ENCODE measurements at regions of chr1 and their contacts with region 1.

Region 1: DNA sequence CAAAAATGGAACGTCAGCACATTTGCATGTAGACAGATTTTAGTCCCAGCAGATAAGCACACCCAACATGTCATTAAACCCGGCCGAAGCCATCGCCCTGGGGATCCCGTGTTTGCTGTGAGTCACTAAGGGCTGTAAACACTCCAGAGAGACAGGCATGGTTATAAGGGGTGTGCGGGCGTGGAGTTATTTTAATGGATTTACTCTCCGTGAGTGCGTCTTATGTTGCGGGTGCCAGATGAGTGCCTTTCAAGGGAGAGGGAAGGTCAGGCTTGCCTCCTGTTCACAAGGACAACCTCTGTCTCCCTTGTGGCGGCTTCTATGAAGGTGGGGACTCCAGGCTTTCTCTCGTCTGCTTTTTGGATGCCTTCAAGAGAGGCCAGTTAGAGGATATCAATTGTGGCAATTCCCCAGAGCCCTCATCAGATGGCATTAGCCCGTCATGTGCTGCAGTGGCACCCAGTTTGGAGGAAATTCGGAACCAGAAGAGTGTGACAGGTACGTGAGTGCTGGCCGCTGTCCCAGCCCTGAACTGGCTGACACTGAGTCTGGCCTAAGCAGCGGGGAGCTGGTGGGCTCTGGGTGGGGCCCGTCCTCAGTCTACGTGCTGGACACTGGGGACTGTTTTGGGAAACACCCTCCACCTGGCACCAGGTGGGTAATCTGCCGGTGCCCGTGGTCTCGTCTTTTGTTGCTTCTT is 223.8 kb upstream of the TMEM51 start:
- DNase-seq: no peak
- H3K4me3 ChIP-seq: no peak overlapping the region
- H3K27ac ChIP-seq: no peak overlapping the region
- H3K4me1 ChIP-seq: peaks cover 17% of the 10 kb centered on the region
- H3K27me3 ChIP-seq: no peaks in the 10 kb centered on the region
- CTCF ChIP-seq: no peak

Region 2: DNA sequence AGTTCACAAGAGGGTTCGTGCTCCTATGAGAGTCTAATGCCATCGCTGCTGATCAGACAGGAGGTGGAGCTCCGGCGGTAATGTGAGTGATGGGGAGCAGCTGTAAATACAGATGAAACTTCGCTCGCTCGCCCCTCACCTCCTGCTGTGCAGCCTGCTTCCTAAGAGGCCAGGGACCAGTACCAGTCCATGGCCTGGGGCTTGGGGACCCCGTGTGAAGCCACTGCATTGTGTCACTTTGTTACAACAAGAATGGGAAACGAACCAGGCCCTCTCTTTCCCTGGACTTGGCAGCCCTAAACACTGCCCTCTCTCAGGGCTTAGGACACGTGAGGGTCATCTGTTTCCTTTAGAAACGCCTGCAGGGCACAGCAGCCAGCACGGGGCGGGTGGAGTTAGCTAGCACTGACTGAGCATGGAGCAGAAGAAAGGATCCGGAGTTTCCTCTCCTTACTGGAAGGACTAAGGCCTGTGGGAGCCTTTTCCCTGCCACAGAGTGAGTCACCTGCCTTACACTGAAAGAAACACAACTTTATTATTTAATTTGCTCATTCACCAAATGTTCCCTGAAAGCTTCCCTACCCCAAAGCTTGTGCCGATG is 38.7 kb after region 1 on chr1:
- CTCF ChIA-PET with region 1: no interaction called
- dilution Hi-C with region 1: loop called (anchors 5 kb)
- in situ Hi-C with region 1: no loop called
- intact Hi-C with region 1: no loop called
- DNase-seq: peak; percentile 90
- H3K4me3 ChIP-seq: no peak overlapping the region
- H3K27ac ChIP-seq: peak overlapping the region; percentile 50
- H3K4me1 ChIP-seq: peaks cover 29% of the 10 kb centered on the region
- H3K27me3 ChIP-seq: no peaks in the 10 kb centered on the region
- CTCF ChIP-seq: no peak

Region 3: DNA sequence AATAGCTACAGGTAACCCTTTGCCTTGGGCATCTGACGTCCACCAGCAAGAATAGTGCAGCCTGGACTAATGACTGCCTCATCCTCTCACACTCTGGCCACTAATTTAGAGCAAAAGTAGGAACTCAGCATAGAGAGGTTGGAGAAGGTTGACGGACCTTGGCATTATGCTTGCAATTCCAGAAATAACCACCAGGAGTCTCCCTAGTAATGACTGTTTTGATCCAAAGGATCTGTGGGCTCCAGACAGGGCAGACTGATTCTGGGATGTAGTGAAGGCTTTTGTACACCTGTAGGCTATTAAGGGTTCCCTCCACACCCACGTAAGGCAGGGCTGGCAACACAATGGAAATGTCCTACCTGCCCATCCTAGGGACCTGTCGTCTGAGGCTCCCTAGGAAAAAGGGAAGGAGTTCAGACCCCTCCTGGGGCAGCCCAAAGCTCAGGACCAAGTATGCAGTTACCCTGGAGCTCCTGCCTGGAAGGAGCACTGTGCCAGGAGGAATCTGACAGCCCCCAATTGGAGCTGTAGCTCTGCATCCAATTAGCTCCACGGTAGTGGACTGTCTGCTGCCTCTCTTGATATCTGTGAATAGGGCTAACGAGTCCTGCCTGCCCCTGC is 132.9 kb after region 1 on chr1:
- CTCF ChIA-PET with region 1: no interaction called
- dilution Hi-C with region 1: no loop called
- in situ Hi-C with region 1: no loop called
- intact Hi-C with region 1: no loop called
- DNase-seq: no peak
- H3K4me3 ChIP-seq: no peak overlapping the region
- H3K27ac ChIP-seq: no peak overlapping the region
- H3K4me1 ChIP-seq: peaks cover 6% of the 10 kb centered on the region
- H3K27me3 ChIP-seq: no peaks in the 10 kb centered on the region
- CTCF ChIP-seq: peak; percentile 52 to 55

Measured in mammary epithelial cell (primary cell).